ENCODE measurements at regions of chr13 and their contacts with region 1.

Region 1: DNA sequence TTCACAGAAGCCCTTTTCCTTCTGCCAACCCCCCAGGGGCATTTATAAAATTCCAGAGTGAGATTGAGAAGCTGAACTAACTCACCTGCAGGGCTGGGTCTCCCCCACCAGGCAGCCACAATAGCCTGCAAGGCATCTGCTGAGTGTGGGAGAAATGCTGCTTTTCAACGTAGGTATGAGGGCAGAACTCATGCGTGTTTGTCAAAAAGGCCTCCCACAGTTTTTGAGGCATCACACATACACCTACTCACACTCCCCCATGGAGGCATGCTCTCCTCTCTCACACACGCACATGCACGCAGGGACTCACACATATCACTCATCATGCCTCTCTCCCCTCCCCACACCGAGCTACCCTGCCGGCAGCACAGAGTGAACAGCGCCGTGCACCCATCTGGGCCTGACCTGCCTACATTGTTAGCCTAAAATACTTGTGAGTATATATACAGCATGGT is 390.5 kb downstream of the FGF9 start:
- DNase-seq: peak; percentile 50
- CTCF ChIP-seq: peak; percentile 34

Region 2: DNA sequence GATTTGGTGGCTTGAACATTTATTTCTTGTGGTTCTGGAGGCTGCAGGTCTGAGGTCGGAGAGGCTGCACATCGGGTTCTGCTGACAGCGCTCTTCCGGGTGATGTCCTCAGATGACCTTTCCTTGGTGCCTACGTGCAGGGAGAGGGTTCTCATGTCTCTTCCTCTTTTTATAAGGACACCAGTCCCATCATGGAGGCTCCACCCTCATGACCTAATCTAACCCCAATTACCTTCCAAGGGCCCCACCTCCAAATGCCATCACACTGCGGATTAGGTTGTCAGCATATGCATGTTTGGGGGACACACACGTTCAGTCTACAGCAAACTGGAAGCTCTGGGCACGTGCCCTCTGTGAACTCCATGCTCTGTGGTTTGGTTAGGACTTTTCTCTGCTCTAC is 51.9 kb before region 1 on chr13:
- CTCF ChIA-PET with region 1: no interaction called
- POLR2A ChIA-PET with region 1: no interaction called
- DNase-seq: no peak
- CTCF ChIP-seq: no peak

Region 3: DNA sequence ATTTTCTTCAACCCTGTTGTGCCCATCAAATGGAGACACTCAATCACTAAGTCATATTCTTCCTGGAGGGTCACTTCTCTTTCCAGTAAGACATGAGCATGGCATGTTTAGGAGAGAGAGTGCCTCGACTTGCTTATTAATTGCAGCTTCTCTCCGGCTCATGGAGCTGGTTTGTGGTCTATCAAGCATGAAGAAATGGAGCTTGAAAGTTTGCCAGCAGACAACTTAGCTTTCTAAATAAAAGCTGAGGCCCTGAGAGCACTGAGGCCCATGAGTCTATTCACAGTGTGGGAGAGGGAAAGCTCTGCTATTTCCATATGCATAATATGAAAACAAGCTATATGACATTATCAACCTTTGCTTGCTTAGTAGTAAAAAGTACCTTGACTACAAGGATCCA is 12.0 kb before region 1 on chr13:
- CTCF ChIA-PET with region 1: interaction called, 10 read pairs
- POLR2A ChIA-PET with region 1: no interaction called
- DNase-seq: no peak
- CTCF ChIP-seq: no peak

Region 4: DNA sequence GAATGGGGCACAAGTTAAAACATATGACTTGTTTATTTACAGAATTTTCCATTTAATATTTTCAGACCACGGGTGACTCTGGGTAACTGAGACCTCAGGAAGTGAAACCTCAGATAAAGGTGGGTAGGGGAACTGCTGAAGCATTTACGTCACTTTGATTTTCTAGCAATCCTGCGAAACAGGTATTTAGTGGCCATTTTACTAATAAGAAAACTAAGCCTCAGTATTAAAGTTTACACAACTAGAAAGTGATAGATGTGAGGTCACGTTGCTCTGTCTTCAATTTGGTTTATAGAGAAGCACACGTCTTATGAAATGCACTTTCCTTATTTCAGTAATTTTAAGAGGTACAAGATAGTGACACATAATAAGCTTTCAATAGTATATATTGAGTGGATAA is 12.3 kb after region 1 on chr13:
- CTCF ChIA-PET with region 1: interaction called, 11 read pairs
- POLR2A ChIA-PET with region 1: no interaction called
- DNase-seq: peak; percentile 32
- CTCF ChIP-seq: no peak